ENCODE measurements at regions of chr6 and their contacts with region 1.

Region 1: DNA sequence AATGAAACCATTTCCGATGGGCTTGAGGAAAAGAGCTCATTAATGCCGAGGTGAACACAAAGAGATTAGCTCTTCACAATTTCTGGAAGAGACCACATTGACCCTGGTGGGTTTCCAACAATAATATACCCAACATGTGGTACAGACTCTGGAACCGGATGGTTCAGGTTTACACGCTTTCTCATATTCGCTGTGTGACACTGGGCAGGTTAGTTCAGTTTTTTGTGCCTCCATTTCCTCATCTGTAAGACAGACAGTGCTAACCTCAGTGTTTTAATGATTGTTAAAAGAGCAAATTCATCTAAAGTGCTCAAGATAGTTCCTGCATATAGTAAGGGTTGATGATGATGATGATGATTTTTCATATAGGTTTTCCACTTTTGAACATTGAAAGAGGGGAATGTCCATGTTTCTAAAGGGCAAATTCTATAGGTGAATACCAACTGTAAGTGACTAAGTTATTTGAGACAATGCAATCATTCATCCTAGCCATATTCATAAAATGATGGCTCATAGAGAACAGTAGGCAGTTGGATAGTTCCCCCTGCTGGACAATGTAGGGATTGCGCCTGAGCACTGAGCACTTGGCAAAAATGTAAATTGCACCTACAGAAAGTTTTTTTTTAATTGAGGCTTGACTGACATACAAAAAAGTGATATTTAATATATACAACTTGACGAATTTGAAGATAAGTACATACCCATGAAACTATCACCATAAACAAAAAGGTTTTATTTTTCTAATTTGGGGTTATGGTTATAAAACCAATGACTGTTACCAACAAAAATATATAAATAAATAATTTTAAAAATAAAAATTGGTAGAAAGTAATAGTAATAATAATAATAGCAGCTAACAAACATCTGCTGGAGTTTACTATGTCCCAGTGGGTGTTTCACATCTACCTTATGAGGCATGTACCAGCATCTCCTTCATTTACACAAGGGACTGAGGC is 2.1 kb upstream of the PERP start:
- DNase-seq: peak; percentile 70 to 78
- H3K4me3 ChIP-seq: no peak overlapping the region; the same call in 1 of the 2 replicates
- H3K27ac ChIP-seq: peak overlapping the region; percentile 78; the same call in 1 of the 2 replicates
- H3K4me1 ChIP-seq: peaks cover 30% of the 10 kb centered on the region
- H3K27me3 ChIP-seq: no peaks in the 10 kb centered on the region
- CTCF ChIP-seq: peak; percentile 99

Region 2: GRCh38 chr6:137271245-137272183 is 837.8 kb before region 1 on chr6:
- CTCF ChIA-PET with region 1: no interaction called
- POLR2A ChIA-PET with region 1: no interaction called
- intact Hi-C with region 1: loop called (anchors 10 kb)
- DNase-seq: peak in 1 of 2 experiments; percentile 54
- H3K4me3 ChIP-seq: no peak overlapping the region
- H3K27ac ChIP-seq: no peak overlapping the region
- H3K4me1 ChIP-seq: no peaks in the 10 kb centered on the region
- H3K27me3 ChIP-seq: peaks cover 3% of the 10 kb centered on the region; the same call in 1 of the 2 replicates
- CTCF ChIP-seq: peak; percentile 98

Region 3: GRCh38 chr6:137799950-137800568 is 309.3 kb before region 1 on chr6:
- CTCF ChIA-PET with region 1: no interaction called
- POLR2A ChIA-PET with region 1: no interaction called
- intact Hi-C with region 1: loop called (anchors 5 kb)
- DNase-seq: peak in 1 of 2 experiments; percentile 14
- H3K4me3 ChIP-seq: no peak overlapping the region
- H3K27ac ChIP-seq: no peak overlapping the region
- H3K4me1 ChIP-seq: no peaks in the 10 kb centered on the region
- H3K27me3 ChIP-seq: no peaks in the 10 kb centered on the region
- CTCF ChIP-seq: peak; percentile 83

Region 4: DNA sequence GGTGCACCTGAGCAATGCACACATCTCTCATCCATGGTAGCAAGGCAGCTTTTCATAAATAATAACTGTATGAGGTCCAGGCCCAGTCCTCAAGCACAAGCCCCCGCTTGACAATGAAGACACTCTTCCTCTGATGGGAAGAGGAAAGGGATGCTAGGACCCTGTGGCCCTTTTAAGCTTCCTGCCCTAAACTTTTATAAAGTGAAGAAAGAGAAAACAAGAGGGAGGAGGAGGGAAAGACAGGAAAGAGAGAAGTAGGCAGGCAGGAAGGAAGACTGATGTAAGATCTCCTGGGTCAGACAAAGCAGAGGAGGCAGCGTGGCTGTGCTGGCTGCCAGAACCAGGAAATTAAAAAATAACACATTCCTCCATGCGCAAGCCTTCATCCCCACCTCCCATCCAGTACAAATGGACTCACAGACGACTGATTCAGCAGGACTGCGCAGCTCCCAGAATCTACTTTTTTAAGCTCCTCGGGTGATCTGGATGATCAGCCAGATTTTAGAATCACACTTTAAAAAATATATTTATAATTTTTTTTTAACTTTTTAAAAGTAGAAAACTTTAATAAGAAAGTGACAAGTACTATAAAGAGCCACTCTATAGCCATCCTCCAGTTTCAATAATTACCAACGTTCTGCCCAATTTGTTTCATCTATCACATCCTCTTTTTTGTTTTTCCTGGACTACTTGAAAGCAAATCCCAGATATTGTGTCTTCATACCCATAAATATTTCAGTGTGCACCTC is 225.7 kb before region 1 on chr6:
- CTCF ChIA-PET with region 1: no interaction called
- POLR2A ChIA-PET with region 1: no interaction called
- intact Hi-C with region 1: no loop called
- DNase-seq: no peak
- H3K4me3 ChIP-seq: no peak overlapping the region
- H3K27ac ChIP-seq: no peak overlapping the region; the same call in 1 of the 2 replicates
- H3K4me1 ChIP-seq: no peaks in the 10 kb centered on the region
- H3K27me3 ChIP-seq: no peaks in the 10 kb centered on the region
- CTCF ChIP-seq: no peak

Region 5: DNA sequence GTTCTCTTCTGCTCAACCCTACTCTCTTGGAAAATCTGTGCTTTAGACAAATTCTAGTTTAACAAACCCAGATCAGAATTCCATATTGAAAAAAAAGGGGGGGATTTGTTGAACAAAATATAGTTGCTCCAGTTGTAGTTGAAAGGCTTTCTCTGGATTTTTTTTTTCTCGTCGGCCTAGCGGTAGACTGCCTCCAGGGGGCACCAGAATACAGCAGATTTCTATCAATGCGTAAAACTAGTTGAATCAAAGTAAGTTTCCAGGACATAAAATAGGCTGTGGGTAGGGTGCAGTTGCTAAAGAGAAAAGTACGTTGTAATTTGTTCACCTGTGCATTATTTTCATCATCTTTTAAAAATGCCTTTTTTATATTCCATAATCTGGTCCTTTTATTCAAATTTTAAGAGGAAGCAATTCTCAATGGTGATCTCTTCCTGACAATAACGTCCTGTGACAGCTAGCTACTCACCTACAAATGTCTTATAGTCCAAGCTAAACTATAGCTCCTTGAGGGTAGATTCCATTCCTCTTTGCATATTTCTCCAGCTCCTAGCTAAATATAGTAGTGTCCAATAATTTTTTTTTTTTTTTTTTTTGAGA is 107.5 kb before region 1 on chr6:
- CTCF ChIA-PET with region 1: interaction called, 9 read pairs
- POLR2A ChIA-PET with region 1: interaction called, 7 read pairs
- intact Hi-C with region 1: loop called (anchors 1 kb)
- DNase-seq: peak; percentile 56 to 63
- H3K4me3 ChIP-seq: no peak overlapping the region
- H3K27ac ChIP-seq: no peak overlapping the region
- H3K4me1 ChIP-seq: peaks cover 24% of the 10 kb centered on the region
- H3K27me3 ChIP-seq: no peaks in the 10 kb centered on the region
- CTCF ChIP-seq: peak; percentile 98

Region 6: DNA sequence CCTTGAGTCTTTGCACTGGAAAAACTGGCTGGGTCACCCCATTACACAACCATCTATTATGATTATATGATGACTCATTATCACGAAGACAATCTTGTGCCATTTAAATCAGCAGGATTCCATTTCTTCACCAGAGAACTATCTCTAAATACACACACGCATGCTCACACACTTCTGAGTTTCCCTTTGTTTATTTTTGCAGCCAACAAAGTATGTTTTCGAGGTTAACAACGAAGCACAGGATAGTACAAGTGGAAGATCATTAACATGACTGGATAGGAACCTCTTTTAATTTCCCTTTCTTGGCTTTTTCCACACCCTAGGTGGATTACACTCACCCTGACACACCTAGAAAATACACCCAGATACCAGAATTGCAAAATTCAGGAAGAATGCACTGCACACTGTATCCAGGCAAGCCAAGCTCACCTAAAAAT is 21.0 kb before region 1 on chr6:
- CTCF ChIA-PET with region 1: interaction called, 3 read pairs
- POLR2A ChIA-PET with region 1: interaction called, 6 read pairs
- intact Hi-C with region 1: loop called (anchors 1 kb)
- DNase-seq: peak; percentile 59 to 98
- H3K4me3 ChIP-seq: peak overlapping the region; percentile 38; the same call in 1 of the 2 replicates
- H3K27ac ChIP-seq: peak overlapping the region; percentile 92
- H3K4me1 ChIP-seq: peaks cover 61% of the 10 kb centered on the region
- H3K27me3 ChIP-seq: no peaks in the 10 kb centered on the region
- CTCF ChIP-seq: no peak

Region 7: GRCh38 chr6:138145402-138145801 is 36.1 kb after region 1 on chr6:
- CTCF ChIA-PET with region 1: no interaction called
- POLR2A ChIA-PET with region 1: no interaction called
- intact Hi-C with region 1: no loop called
- DNase-seq: peak in 1 of 2 experiments; percentile 3
- H3K4me3 ChIP-seq: no peak overlapping the region
- H3K27ac ChIP-seq: no peak overlapping the region
- H3K4me1 ChIP-seq: no peaks in the 10 kb centered on the region
- H3K27me3 ChIP-seq: no peaks in the 10 kb centered on the region
- CTCF ChIP-seq: no peak